ENCODE measurements at regions of chr12 and their contacts with region 1.

Region 1: GRCh38 chr12:1605129-1606020 is 11.0 kb upstream of the FBXL14 start:
- DNase-seq: peak in 1 of 2 experiments; percentile 69
- H3K4me3 ChIP-seq: peak overlapping the region; percentile 12 to 56 (median 40); a peak in 7 of 8 replicates
- H3K27ac ChIP-seq: no peak overlapping the region
- H3K4me1 ChIP-seq: peaks cover 0 to 7% (median 2%) of the 10 kb centered on the region in 4 experiments; a peak in 5 of 7 replicates
- H3K27me3 ChIP-seq: peaks cover 0 to 17% (median 15%) of the 10 kb centered on the region in 4 experiments; a peak in 5 of 7 replicates
- CTCF ChIP-seq: peak; percentile 63 to 86 (median 66)
- EP300 ChIP-seq: no peak
- POLR2A ChIP-seq: no peak
- RAD21 ChIP-seq: peak; percentile 82 to 84

Region 2: DNA sequence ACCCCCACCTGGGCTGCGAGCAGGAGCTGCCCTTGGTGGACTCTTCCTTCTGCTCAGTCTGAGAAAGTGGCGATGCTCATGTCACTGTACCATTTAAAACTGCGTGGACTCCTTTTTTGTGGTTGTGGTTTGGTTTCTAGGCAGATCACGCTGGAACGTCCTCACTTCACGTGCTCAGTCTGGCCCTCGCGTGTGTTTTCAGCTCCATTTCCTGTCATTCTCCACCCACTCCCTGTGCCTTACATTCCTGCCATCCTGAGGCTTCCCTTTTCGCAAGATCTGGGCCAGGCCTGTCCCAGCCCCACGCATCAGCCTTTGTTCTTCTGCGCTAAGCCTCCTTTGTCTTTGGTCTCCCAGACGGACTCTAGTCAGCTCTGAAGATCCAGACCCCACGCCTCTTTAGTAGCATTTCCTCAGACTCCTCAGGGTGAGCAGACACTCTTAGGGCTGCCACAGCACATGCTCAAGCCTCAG is 116.4 kb before region 1 on chr12:
- CTCF ChIA-PET with region 1: no interaction called
- POLR2A ChIA-PET with region 1: no interaction called
- DNase-seq: no peak
- H3K4me3 ChIP-seq: no peak overlapping the region
- H3K27ac ChIP-seq: no peak overlapping the region
- H3K4me1 ChIP-seq: no peaks in the 10 kb centered on the region
- H3K27me3 ChIP-seq: no peaks in the 10 kb centered on the region
- CTCF ChIP-seq: no peak
- EP300 ChIP-seq: no peak
- POLR2A ChIP-seq: no peak
- RAD21 ChIP-seq: no peak

Region 3: DNA sequence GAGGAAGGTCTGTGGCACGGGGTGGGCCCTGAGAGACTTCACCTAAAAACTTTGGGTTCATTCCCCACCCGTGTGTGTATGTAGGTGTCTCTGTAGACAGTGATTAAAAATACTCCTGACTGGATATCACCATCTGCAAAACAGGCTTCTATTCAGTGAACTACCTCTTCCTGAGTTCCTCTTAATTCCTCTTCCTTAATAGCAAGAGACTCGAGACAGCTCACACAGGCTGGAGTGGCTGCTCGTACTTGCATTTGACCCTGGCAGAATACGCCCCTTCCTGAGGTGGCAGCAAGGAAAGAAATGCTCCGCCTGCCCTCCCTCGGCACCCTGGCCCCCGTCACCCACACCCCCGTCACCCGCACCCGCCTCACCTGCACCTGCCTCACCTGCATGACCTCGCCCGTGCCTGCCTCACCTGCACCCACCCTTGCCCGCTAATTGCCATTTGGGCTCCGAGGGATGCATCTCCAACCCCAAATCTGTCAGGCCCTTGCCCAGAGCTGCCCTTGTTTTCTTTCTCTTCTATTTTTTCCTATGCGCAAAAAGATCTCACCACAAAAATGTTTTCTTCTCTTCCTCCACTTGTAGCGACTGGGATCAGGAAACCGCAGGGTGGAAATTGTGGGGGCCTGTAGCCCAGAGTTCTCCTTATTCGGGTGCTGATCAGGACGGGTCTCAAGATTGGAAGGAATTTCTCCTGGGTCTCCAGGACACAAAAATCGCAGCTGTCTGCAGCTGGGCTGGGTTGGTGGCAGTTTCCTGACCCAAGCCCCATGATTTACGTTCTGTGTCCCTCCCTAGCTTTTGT is 100.9 kb before region 1 on chr12:
- CTCF ChIA-PET with region 1: no interaction called
- POLR2A ChIA-PET with region 1: no interaction called
- DNase-seq: peak in 1 of 2 experiments; percentile 22
- H3K4me3 ChIP-seq: no peak overlapping the region
- H3K27ac ChIP-seq: no peak overlapping the region
- H3K4me1 ChIP-seq: peaks cover 0 to 3% (median 0%) of the 10 kb centered on the region in 4 experiments; a peak in 1 of 7 replicates
- H3K27me3 ChIP-seq: no peaks in the 10 kb centered on the region
- CTCF ChIP-seq: no peak
- EP300 ChIP-seq: no peak
- POLR2A ChIP-seq: no peak
- RAD21 ChIP-seq: no peak

Region 4: GRCh38 chr12:1594261-1595025 is 10.9 kb before region 1 on chr12 and contains the start of gene FBXL14:
- CTCF ChIA-PET with region 1: interaction called, 10 read pairs
- POLR2A ChIA-PET with region 1: interaction called, 6 read pairs
- DNase-seq: peak in 1 of 2 experiments; percentile 92
- H3K4me3 ChIP-seq: peak within 1 kb of the TSS; percentile 64 to 71 (median 66)
- H3K27ac ChIP-seq: peak within 1 kb of the TSS; percentile 34; the same call in 1 of the 2 replicates
- H3K4me1 ChIP-seq: peaks cover 14 to 34% (median 21%) of the 10 kb centered on the region in 4 experiments
- H3K27me3 ChIP-seq: peaks cover 21 to 61% (median 50%) of the 10 kb centered on the region in 4 experiments
- CTCF ChIP-seq: peak in 1 of 3 experiments; percentile 5; a peak in 1 of 4 replicates
- EP300 ChIP-seq: peak in 1 of 2 experiments; percentile 86; a peak in 1 of 3 replicates
- POLR2A ChIP-seq: peak in 1 of 2 experiments; percentile 28; a peak in 1 of 3 replicates
- RAD21 ChIP-seq: no peak
- total RNA-seq, gene FBXL14: 5.5 and 6.2 TPM in 2 replicates

Region 5: GRCh38 chr12:1616233-1617066 is 11.1 kb after region 1 on chr12:
- CTCF ChIA-PET with region 1: interaction called, 12 read pairs
- POLR2A ChIA-PET with region 1: no interaction called
- DNase-seq: no peak
- H3K4me3 ChIP-seq: no peak overlapping the region
- H3K27ac ChIP-seq: no peak overlapping the region
- H3K4me1 ChIP-seq: no peaks in the 10 kb centered on the region; a peak in 1 of 7 replicates
- H3K27me3 ChIP-seq: peaks cover 0 to 9% (median 2%) of the 10 kb centered on the region in 4 experiments; a peak in 4 of 7 replicates
- CTCF ChIP-seq: no peak
- EP300 ChIP-seq: no peak
- POLR2A ChIP-seq: no peak
- RAD21 ChIP-seq: no peak

Region 6: DNA sequence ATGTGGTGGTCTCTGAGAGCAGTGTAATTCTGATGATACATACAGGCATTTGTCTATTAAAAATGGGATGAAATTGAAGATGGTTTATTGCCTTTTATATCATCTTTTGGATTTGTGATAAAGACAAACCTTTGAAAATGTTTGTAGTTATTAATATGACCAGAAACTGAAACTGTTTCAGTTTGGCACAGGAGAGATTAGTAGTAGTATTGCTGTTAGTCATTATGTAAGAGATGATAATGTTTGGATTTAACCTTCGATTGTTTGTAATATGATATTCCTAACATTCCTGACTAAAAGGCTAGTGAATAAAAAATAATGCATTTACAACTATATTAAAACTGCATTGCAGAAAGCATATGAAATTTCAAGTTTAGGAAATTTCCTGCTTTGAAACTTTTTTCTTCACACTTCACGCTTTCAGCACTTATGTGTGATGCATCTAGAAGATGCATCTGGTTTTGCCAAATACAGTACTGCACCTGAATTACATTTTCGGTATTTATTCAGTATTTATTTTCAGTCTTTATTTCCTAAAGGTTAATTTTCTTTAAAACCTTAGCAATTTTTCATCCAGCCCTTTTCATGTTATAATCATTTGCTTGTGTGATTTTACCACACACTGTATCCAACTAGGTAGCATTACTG is 111.0 kb after region 1 on chr12:
- CTCF ChIA-PET with region 1: no interaction called
- POLR2A ChIA-PET with region 1: no interaction called
- DNase-seq: no peak
- H3K4me3 ChIP-seq: no peak overlapping the region
- H3K27ac ChIP-seq: no peak overlapping the region
- H3K4me1 ChIP-seq: no peaks in the 10 kb centered on the region; a peak in 1 of 7 replicates
- H3K27me3 ChIP-seq: no peaks in the 10 kb centered on the region
- CTCF ChIP-seq: no peak
- EP300 ChIP-seq: no peak
- POLR2A ChIP-seq: no peak
- RAD21 ChIP-seq: no peak

Measured in H1 (cell line).